Transverse colon (tissue), 4 donors: ENCODE measurements at regions of chr20 and their contacts with region 1.

Region 1: DNA sequence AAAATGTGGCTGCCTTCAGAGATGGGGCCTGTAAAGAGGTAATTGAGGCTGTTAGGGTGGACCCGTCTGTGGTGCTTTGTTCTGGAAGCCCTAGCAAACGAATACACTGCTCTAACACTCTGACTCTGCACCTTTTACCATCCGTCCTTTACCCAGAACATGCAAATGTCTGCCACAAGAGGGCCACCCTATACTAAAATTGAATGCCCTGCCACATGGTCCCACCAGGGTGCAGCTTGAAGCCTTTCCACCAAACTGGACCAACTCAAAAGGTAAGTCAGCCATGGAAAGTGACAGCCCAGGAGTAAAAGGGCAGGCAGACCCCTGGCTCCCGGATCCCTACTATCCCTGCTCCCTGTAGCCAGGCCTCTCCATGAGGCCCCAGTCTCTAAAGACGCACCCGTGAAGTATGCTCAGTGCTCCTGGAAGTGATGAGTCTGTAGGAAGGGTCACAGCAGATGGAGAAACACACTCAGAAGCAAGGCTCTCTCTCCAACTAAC is 5.8 kb upstream of the BFSP1 start:
- DNase-seq: peak; percentile 78
- H3K4me3 ChIP-seq: no peak overlapping the region
- H3K27ac ChIP-seq: peak overlapping the region in 3 of 4 donors; percentile 15 to 62 (median 50)
- H3K4me1 ChIP-seq: peaks cover 3 to 11% (median 5%) of the 10 kb centered on the region in 4 donors
- H3K27me3 ChIP-seq: no peaks in the 10 kb centered on the region
- CTCF ChIP-seq: peak; percentile 85 to 99 (median 89)
- EP300 ChIP-seq: no peak
- POLR2A ChIP-seq: no peak

Region 2: DNA sequence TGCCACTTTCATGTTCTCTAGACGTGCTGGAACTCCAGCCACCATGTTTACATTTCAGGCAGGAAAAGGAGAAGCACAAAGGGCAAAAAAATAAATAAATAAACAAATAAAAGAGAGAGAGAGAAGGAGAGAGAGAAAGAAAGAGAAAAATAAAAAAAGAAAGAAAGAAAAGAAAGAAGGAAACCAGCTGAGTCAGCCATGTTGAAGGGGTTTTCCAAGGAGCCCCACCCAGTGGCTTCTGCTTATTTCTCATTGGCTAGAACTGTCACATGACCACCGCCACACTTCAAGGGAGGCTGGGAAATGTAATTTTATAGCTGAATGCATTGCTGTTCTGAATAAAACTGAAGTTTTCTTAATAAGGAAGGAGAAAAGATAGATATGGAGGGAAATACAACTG is 76.9 kb before region 1 on chr20:
- in situ Hi-C with region 1: no loop called
- intact Hi-C with region 1: no loop called
- DNase-seq: no peak
- H3K4me3 ChIP-seq: no peak overlapping the region
- H3K27ac ChIP-seq: no peak overlapping the region
- H3K4me1 ChIP-seq: no peaks in the 10 kb centered on the region
- H3K27me3 ChIP-seq: no peaks in the 10 kb centered on the region
- CTCF ChIP-seq: no peak
- EP300 ChIP-seq: no peak
- POLR2A ChIP-seq: no peak

Region 3: GRCh38 chr20:17569616-17570346 is 32.8 kb after region 1 on chr20 and contains the start of gene DSTN:
- in situ Hi-C with region 1: no loop called
- intact Hi-C with region 1: loop called (anchors 5 kb)
- DNase-seq: peak; percentile 94
- H3K4me3 ChIP-seq: peak within 1 kb of the TSS; percentile 85 to 97 (median 92)
- H3K27ac ChIP-seq: peak within 1 kb of the TSS; percentile 98 to 100 (median 98)
- H3K4me1 ChIP-seq: peaks cover 14 to 63% (median 54%) of the 10 kb centered on the region in 4 donors
- H3K27me3 ChIP-seq: no peaks in the 10 kb centered on the region
- CTCF ChIP-seq: no peak
- EP300 ChIP-seq: peak; percentile 27
- POLR2A ChIP-seq: peak; percentile 97
- total RNA-seq, gene DSTN: 280 to 589 (median 373) TPM

Region 4: GRCh38 chr20:17617551-17618223 is 80.7 kb after region 1 on chr20:
- in situ Hi-C with region 1: loop called in 1 of 4 experiments (anchors 5 kb)
- intact Hi-C with region 1: loop called (anchors 1 kb)
- DNase-seq: peak; percentile 49
- H3K4me3 ChIP-seq: no peak overlapping the region
- H3K27ac ChIP-seq: no peak overlapping the region
- H3K4me1 ChIP-seq: peaks cover 4 to 40% (median 26%) of the 10 kb centered on the region in 4 donors
- H3K27me3 ChIP-seq: no peaks in the 10 kb centered on the region
- CTCF ChIP-seq: peak; percentile 52 to 74 (median 61)
- EP300 ChIP-seq: no peak
- POLR2A ChIP-seq: no peak

Region 5: GRCh38 chr20:17648791-17649730 is 112.1 kb after region 1 on chr20:
- in situ Hi-C with region 1: loop called in 2 of 4 experiments (anchors 25 kb)
- intact Hi-C with region 1: no loop called
- DNase-seq: peak; percentile 69
- H3K4me3 ChIP-seq: no peak overlapping the region
- H3K27ac ChIP-seq: peak overlapping the region; percentile 4 to 53 (median 33)
- H3K4me1 ChIP-seq: peaks cover 60 to 85% (median 73%) of the 10 kb centered on the region in 4 donors
- H3K27me3 ChIP-seq: no peaks in the 10 kb centered on the region
- CTCF ChIP-seq: peak; percentile 19 to 54 (median 44)
- EP300 ChIP-seq: no peak
- POLR2A ChIP-seq: no peak

Region 6: DNA sequence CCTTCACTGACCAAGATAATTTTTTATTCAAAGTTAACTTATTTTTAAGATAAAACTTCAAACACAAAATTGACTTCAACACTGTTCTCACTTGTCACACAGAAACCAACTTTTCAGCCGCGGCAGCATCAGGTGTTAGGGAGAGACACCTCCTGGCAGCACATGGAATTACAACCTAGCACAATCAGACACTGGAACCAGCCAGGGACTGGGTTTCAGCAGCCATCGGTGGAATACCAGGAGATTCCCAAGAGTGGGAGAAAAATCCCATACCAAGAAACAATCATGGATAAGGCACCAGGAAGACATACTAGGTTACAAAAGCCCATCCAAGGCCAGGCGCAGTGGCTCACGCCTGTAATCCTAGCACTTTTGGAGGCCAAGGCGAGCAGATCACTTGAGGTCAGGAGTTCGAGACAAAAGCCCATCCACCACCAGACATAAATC is 361.6 kb after region 1 on chr20:
- in situ Hi-C with region 1: loop called in 1 of 4 experiments (anchors 25 kb)
- intact Hi-C with region 1: no loop called
- DNase-seq: peak; percentile 81
- H3K4me3 ChIP-seq: no peak overlapping the region
- H3K27ac ChIP-seq: no peak overlapping the region
- H3K4me1 ChIP-seq: peaks cover 0 to 19% (median 2%) of the 10 kb centered on the region in 4 donors
- H3K27me3 ChIP-seq: no peaks in the 10 kb centered on the region
- CTCF ChIP-seq: peak; percentile 89 to 98 (median 96)
- EP300 ChIP-seq: no peak
- POLR2A ChIP-seq: no peak